ENCODE measurements at regions of chr14 and their contacts with region 1.

Region 1: GRCh38 chr14:96100161-96101029 is 61.2 kb downstream of the C14orf132 start:
- DNase-seq: peak; percentile 65 to 84
- ATAC-seq: peak; percentile 58

Region 2: GRCh38 chr14:95993768-95994592 is 106.4 kb before region 1 on chr14:
- intact Hi-C with region 1: loop called in 1 of 2 experiments (anchors 5 kb)
- DNase-seq: no peak
- ATAC-seq: no peak

Region 3: DNA sequence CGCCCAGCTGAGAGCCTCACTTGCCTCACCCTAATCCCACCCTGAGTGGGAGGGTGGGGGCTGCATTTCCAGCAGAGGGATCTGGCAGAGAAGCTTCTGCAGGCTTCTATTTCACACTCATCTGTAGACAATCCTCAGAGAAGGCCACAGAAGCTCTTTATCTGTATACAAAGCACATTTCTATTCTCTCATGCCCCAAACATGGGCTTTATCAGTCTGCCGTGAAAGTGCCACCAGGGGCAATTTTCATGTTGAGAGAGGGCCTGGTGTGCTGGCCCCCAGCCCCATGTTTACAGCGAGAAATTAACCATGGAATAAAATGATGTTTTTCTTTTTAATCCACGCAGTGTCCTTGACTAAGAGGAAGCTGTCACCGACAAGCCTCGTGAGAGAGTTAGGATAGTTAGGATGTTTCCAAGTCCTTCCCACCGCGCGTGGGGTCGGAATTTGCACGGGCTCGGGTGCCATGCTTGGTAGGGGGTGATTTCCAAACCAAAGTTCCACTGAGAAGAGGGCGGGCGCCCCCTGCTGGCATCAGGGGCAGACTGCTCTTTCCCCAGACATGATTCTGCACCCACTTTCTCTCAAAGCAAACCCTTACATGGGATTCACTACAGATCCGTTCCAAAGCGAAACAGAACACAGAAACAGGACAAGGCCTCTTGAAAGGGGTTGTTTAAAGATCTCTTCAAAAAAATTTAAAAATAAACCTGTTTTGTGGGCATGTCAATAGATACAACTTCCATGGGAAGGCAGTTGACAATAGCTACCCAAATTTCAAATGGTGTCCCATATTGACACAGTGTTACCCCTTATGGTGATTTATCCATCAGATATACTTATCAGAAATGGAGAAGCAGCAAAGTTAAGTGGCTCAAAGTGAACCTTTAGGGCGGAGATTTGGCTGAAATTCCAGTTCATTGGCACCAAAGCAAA is 175.1 kb after region 1 on chr14:
- intact Hi-C with region 1: loop called (anchors 5 to 10 kb)
- DNase-seq: peak in 1 of 2 donors; percentile 81
- ATAC-seq: peak; percentile 59

Region 4: GRCh38 chr14:96424109-96424989 is 324.0 kb after region 1 on chr14:
- intact Hi-C with region 1: loop called in 1 of 2 experiments (anchors 10 kb)
- DNase-seq: peak; percentile 37 to 60
- ATAC-seq: peak; percentile 96

Measured in left colon (tissue), 2 donors.